ENCODE measurements at regions of chr3 and their contacts with region 1.

Region 1: DNA sequence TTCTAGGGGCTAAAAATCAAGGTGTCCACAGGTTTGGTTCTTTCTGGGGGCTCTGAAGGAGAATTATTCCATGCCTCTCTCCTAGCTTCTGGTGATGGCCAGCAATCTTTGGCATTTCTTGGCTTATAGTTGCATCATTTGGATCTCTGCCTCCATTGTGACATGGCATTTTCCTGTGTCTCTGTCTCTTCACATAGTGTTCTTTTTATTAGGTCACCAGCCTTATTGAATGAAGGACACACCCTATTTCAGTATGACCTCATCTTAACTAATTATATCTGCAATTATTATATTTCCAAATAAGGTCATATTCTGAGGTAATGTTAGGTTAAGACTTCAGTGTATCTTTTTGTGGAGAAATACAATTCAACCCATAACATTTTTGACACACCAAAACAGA is 3.2 kb upstream of the GBE1 start:
- DNase-seq: no peak
- ATAC-seq: no peak
- H3K4me3 Mint-ChIP-seq: no peak overlapping the region
- H3K27ac Mint-ChIP-seq: no peak overlapping the region
- H3K4me1 Mint-ChIP-seq: peaks cover 19% of the 10 kb centered on the region
- H3K27me3 Mint-ChIP-seq: peaks cover 2% of the 10 kb centered on the region

Region 2: DNA sequence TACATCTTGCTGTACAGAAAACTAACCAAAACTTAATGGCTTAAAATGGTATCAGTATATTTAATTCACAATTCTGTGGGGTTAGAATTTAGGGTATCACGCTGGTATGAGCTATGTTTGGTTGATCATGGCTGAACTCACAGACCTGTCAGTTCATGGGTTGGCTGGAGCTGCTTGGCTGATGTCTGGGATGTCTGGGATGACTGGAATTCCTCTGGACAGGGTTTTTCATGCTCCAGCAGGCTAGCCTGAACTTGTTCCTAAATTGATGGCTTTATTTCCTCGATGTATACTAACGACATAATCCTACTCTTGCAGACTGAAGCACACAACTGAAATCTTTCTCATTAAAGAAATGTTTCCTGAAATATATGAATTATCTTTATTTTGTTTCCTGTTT is 335.7 kb after region 1 on chr3:
- CTCF ChIA-PET with region 1: no interaction called
- POLR2A ChIA-PET with region 1: no interaction called
- intact Hi-C with region 1: loop called in 1 of 2 experiments (anchors 5 kb)
- DNase-seq: no peak
- ATAC-seq: no peak
- H3K4me3 Mint-ChIP-seq: no peak overlapping the region
- H3K27ac Mint-ChIP-seq: no peak overlapping the region
- H3K4me1 Mint-ChIP-seq: no peaks in the 10 kb centered on the region
- H3K27me3 Mint-ChIP-seq: no peaks in the 10 kb centered on the region